AG04450 (cell line): ENCODE measurements at regions of chr1 and their contacts with region 1.

Region 1: DNA sequence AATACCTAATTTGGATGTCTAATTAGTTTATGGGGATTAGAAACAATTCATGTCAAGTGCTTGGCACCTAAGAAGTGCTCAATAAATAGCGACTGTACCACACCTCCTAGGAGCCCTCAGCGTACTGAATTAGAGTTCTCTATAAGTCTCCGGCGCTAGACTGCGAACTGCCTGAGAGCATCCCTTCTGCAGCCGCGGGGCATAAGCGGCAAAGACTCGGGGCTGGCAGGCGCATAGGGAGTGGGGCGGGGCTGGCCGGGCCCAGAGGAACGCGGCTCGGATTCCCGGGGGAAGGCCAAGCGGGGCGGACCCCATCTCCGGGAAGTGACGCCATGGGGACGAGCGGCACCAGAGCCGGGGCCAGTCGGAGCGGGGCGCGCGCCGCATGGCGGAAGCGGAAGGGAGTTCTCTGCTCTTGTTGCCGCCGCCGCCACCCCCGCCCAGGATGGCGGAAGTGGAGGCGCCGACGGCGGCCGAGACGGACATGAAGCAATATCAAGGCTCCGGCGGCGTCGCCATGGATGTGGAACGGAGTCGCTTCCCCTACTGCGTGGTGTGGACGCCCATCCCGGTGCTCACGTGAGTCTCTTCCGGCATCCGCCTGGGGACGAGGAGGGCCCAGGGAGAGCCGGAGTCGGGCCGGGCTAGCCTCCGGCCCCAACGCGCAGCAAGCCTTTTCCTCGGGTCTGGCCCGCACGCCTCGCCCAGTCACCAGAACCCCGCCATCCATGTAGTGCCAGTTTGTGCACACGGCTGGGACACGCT is at the start of gene TMEM222:
- DNase-seq: peak; percentile 88
- H3K4me3 ChIP-seq: peak within 1 kb of the TSS; percentile 100
- H3K27ac ChIP-seq: peak within 1 kb of the TSS; percentile 83
- H3K27me3 ChIP-seq: no peaks in the 10 kb centered on the region
- CTCF ChIP-seq: 0 out of 2 replicates have a peak, but pooled peaks have one; percentile 11
- polyA plus RNA-seq, gene TMEM222: 27.8 and 37.2 TPM in 2 replicates

Region 2: DNA sequence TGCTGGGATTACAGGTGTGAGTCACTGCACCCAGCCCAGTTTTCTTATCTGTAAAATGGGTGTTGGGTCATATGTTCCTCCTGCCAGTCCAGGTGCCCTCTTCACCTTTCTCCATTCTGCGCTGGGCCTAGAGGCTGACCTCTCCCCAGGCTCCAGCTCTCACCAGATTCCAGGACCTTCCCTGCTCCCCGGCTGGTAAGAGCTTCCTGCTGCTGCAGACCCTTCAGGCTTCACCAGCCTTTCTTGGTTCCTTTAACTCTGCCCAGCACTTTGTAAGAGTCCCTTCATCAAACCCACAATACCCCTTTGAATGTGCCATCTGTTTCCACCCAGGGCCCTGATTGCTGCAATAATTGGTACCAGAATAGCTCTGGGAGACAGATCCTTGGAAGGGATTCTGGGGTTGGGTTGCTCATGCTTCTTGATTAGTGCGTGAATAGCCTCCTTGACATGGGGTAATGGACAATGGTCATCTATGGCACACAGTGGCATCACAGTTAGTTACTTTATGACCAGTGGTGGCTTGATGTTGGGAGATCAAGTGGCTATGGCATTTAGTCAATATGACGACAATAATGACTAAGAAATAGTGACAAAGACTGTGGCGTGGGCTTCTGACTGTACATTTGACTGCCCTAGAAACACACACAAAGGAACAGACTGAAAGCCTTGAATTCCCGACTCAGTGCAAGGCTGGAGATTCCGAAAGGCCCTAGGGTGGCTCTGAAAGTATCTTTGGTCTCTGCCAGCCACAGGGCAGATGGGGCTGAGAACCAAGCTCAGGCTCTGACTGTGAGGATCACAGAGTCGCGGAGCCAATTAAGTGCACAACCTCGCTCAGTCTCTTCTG is 234.4 kb before region 1 on chr1:
- CTCF ChIA-PET with region 1: no interaction called
- POLR2A ChIA-PET with region 1: no interaction called
- DNase-seq: no peak
- H3K4me3 ChIP-seq: no peak overlapping the region
- H3K27ac ChIP-seq: no peak overlapping the region
- H3K27me3 ChIP-seq: peaks cover 15% of the 10 kb centered on the region
- CTCF ChIP-seq: no peak

Region 3: GRCh38 chr1:27332536-27333281 is 10.7 kb after region 1 on chr1:
- CTCF ChIA-PET with region 1: interaction called, 23 read pairs
- POLR2A ChIA-PET with region 1: interaction called, 4 read pairs
- DNase-seq: no peak
- H3K4me3 ChIP-seq: no peak overlapping the region
- H3K27ac ChIP-seq: no peak overlapping the region
- H3K27me3 ChIP-seq: no peaks in the 10 kb centered on the region
- CTCF ChIP-seq: peak; percentile 81

Region 4: GRCh38 chr1:27357281-27358037 is 35.5 kb after region 1 on chr1:
- CTCF ChIA-PET with region 1: interaction called, 11 read pairs
- POLR2A ChIA-PET with region 1: no interaction called
- DNase-seq: no peak
- H3K4me3 ChIP-seq: no peak overlapping the region
- H3K27ac ChIP-seq: no peak overlapping the region
- H3K27me3 ChIP-seq: no peaks in the 10 kb centered on the region
- CTCF ChIP-seq: peak; percentile 86

Region 5: DNA sequence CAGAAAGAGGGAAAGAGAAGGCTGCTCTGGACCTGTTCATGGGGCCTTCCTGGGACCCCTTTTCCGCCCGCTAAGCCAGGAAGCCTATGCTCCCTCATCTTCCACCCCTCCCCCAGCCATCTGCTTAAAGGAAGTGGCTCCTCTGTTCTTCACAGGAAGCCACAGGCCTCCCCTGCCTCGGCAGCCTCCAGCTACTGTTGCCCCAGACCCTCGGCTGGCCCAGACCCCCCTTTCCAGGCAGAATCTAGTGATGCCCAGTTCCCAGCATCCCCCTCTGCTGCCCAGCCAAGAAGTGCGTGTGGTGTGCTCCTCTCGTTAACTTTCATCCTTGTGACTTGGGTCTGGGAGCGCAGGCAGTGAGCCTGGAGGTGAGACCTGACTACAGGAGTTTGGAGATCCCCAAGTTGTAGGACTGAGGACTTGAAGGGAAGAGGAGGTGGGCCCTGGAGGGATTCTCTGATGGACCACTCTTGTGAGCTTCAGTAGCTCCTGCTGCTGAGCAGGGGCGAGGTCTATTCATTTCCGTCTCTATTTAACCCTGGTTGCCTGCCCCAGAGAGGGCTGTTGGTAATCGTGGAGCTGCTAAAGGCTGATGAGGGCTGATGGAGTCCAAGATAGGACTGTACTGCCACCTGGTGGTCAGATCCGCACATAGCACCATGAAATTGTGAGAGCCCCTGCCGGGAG is 340.9 kb after region 1 on chr1:
- CTCF ChIA-PET with region 1: no interaction called
- POLR2A ChIA-PET with region 1: no interaction called
- DNase-seq: no peak
- H3K4me3 ChIP-seq: no peak overlapping the region
- H3K27ac ChIP-seq: peak overlapping the region; percentile 21
- H3K27me3 ChIP-seq: no peaks in the 10 kb centered on the region
- CTCF ChIP-seq: peak; percentile 87